PC-3 (cell line): ENCODE measurements at regions of chr13 and their contacts with region 1.

Region 1: DNA sequence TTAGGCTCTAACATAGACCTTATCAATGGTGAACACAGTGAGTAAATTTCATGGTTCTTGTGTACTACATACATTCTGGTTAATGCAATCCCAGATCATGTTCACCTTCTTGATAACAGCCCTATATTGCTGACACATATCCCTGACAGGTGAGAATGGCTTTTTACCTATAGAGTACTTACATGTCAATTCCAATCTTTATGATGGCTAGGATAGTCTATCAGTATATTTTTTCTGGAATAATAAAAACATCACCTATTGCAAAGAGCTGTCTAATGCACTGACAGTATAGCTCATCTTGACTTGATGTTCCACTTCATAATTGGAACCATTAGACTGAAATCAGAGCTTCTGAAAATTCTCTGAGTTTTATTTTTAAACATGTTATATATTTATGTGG is 199.4 kb downstream of the ENOX1 start:
- DNase-seq: no peak
- ATAC-seq: no peak
- H3K4me3 ChIP-seq: no peak overlapping the region
- H3K27ac ChIP-seq: no peak overlapping the region
- H3K4me1 ChIP-seq: no peaks in the 10 kb centered on the region
- H3K27me3 ChIP-seq: no peaks in the 10 kb centered on the region
- CTCF ChIP-seq: no peak

Region 2: DNA sequence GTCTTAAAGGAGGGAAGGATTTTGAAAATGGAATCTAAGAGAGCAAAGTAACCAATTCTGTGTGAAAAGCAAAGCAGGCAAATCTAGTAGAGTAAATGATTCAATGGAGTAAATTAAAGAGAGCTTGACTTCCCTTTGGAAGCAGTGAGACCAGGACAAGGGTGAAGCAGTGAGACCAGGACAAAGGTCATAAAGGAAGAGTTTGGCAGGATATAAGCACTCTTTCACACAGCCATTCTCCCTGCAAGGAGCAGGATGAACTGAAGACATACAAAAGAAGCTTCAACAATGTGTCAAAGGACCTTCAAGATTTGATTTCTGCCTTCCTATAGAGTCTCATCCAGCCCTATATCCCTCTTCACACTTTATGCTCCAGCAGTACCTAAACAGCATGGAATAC is 75.6 kb after region 1 on chr13:
- CTCF ChIA-PET with region 1: no interaction called
- POLR2A ChIA-PET with region 1: no interaction called
- intact Hi-C with region 1: no loop called
- DNase-seq: no peak
- ATAC-seq: no peak
- H3K4me3 ChIP-seq: no peak overlapping the region
- H3K27ac ChIP-seq: no peak overlapping the region
- H3K4me1 ChIP-seq: peaks cover 20% of the 10 kb centered on the region
- H3K27me3 ChIP-seq: no peaks in the 10 kb centered on the region
- CTCF ChIP-seq: no peak

Region 3: GRCh38 chr13:43822969-43823368 is 235.6 kb after region 1 on chr13:
- CTCF ChIA-PET with region 1: no interaction called
- POLR2A ChIA-PET with region 1: interaction called, 12 read pairs
- intact Hi-C with region 1: no loop called
- DNase-seq: peak; percentile 8
- ATAC-seq: no peak
- H3K4me3 ChIP-seq: no peak overlapping the region
- H3K27ac ChIP-seq: no peak overlapping the region
- H3K4me1 ChIP-seq: no peaks in the 10 kb centered on the region
- H3K27me3 ChIP-seq: no peaks in the 10 kb centered on the region
- CTCF ChIP-seq: no peak